ENCODE measurements at regions of chr13 and their contacts with region 1.

Region 1: DNA sequence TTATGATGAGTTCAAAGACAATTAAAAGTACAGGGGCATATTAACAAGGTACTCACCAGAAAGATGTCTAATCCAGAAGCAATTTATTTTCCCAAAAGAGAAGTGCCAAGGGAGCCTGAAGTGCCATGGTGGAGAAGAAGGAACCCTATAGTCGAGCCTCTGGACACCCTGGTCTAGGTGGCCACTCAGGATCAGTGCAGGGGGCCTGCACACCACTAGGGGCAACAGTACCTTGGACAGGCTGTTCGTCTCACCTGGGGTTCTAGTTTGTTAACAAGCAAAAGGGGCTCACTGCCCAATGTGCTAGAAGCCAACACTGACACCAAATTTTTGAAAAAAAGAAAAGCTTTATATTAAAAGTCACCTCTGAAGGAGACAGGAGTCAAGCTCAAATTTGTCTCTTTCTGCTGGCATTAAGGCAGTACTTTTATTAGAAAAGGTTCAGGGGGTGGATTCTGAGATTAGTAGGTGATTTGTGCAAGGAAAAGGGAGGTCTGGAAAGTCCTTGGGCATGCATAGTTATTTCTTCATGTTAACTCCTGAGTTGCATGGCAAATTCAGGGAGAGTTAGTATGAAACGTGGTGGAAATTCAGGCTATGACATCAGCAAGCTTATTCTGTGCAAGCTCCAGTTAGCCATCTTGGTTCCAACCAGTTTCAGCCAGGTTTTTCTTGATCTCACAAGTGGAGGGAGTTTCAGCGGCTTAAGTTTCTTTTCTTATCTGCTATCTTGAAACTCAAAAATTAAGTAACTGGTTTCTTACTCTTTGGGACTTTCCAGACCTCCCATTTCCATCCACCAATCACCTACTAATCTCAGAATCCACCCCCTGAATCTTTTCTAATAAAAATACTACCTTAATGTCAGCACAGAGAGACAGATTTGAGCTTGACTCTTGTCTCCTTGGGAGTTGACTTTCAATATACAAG is 884 bp upstream of the CBY2 start:
- DNase-seq: no peak
- H3K4me3 ChIP-seq: no peak overlapping the region
- H3K27ac ChIP-seq: no peak overlapping the region
- H3K4me1 ChIP-seq: peaks cover 0 to 9% (median 3%) of the 10 kb centered on the region in 4 experiments; a peak in 3 of 7 replicates
- H3K27me3 ChIP-seq: no peaks in the 10 kb centered on the region
- CTCF ChIP-seq: peak; percentile 36 to 66 (median 43)
- EP300 ChIP-seq: no peak
- POLR2A ChIP-seq: no peak
- RAD21 ChIP-seq: peak; percentile 24 to 50; a peak in 3 of 4 replicates

Region 2: GRCh38 chr13:45683701-45684100 is 17.5 kb before region 1 on chr13:
- CTCF ChIA-PET with region 1: interaction called, 10 read pairs
- POLR2A ChIA-PET with region 1: interaction called, 4 read pairs
- DNase-seq: no peak
- H3K4me3 ChIP-seq: no peak overlapping the region
- H3K27ac ChIP-seq: no peak overlapping the region
- H3K4me1 ChIP-seq: peaks cover 0 to 12% (median 4%) of the 10 kb centered on the region in 4 experiments; a peak in 5 of 7 replicates
- H3K27me3 ChIP-seq: no peaks in the 10 kb centered on the region
- CTCF ChIP-seq: peak; percentile 34 to 46 (median 44)
- EP300 ChIP-seq: no peak
- POLR2A ChIP-seq: no peak
- RAD21 ChIP-seq: peak; percentile 24 to 51; a peak in 3 of 4 replicates

Region 3: DNA sequence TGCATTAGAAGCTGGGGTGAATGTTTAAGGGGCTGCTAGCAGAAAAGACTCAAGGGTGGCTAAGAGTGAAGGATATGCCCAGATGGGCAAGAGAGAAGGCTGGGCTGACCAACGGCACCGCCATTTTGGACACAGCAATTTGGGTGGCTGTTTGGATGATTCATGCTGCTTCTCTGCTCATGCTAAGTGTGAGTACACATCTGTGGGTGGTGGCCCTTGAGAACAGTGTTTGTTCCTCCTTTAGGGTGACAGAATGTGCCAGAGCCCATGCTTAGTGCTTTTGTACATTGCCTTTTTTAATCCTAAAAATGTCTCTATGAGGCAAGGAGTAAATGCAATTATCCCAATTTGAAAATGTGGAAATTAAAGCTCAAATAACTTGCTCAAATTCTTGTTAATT is 10.7 kb after region 1 on chr13:
- CTCF ChIA-PET with region 1: interaction called, 31 read pairs
- POLR2A ChIA-PET with region 1: no interaction called
- DNase-seq: no peak
- H3K4me3 ChIP-seq: no peak overlapping the region
- H3K27ac ChIP-seq: no peak overlapping the region
- H3K4me1 ChIP-seq: no peaks in the 10 kb centered on the region
- H3K27me3 ChIP-seq: no peaks in the 10 kb centered on the region
- CTCF ChIP-seq: no peak
- EP300 ChIP-seq: no peak
- POLR2A ChIP-seq: no peak
- RAD21 ChIP-seq: no peak

Region 4: GRCh38 chr13:45718063-45718462 is 16.8 kb after region 1 on chr13:
- CTCF ChIA-PET with region 1: interaction called, 31 read pairs
- POLR2A ChIA-PET with region 1: no interaction called
- DNase-seq: no peak
- H3K4me3 ChIP-seq: no peak overlapping the region
- H3K27ac ChIP-seq: no peak overlapping the region
- H3K4me1 ChIP-seq: peaks cover 0 to under 1% (median 0%) of the 10 kb centered on the region in 4 experiments; a peak in 1 of 7 replicates
- H3K27me3 ChIP-seq: no peaks in the 10 kb centered on the region; a peak in 1 of 7 replicates
- CTCF ChIP-seq: peak; percentile 7 to 86 (median 84)
- EP300 ChIP-seq: no peak
- POLR2A ChIP-seq: no peak
- RAD21 ChIP-seq: peak; percentile 87 to 90